Vagina (tissue), 2 donors: ENCODE measurements at regions of chr18 and their contacts with region 1.

Region 1: GRCh38 chr18:45686891-45687611 is 36.9 kb upstream of the SLC14A1 start:
- DNase-seq: peak in 1 of 2 donors; percentile 95
- H3K4me3 ChIP-seq: no peak overlapping the region
- H3K27ac ChIP-seq: no peak overlapping the region
- H3K4me1 ChIP-seq: no peaks in the 10 kb centered on the region
- H3K27me3 ChIP-seq: no peaks in the 10 kb centered on the region
- CTCF ChIP-seq: no peak
- POLR2A ChIP-seq: no peak

Region 2: GRCh38 chr18:45879681-45880655 is 192.9 kb after region 1 on chr18:
- intact Hi-C with region 1: loop called (anchors 10 kb)
- DNase-seq: no peak
- H3K4me3 ChIP-seq: no peak overlapping the region
- H3K27ac ChIP-seq: no peak overlapping the region
- H3K4me1 ChIP-seq: no peaks in the 10 kb centered on the region
- H3K27me3 ChIP-seq: no peaks in the 10 kb centered on the region
- CTCF ChIP-seq: peak; percentile 88 to 93 (median 93)
- POLR2A ChIP-seq: no peak

Region 3: DNA sequence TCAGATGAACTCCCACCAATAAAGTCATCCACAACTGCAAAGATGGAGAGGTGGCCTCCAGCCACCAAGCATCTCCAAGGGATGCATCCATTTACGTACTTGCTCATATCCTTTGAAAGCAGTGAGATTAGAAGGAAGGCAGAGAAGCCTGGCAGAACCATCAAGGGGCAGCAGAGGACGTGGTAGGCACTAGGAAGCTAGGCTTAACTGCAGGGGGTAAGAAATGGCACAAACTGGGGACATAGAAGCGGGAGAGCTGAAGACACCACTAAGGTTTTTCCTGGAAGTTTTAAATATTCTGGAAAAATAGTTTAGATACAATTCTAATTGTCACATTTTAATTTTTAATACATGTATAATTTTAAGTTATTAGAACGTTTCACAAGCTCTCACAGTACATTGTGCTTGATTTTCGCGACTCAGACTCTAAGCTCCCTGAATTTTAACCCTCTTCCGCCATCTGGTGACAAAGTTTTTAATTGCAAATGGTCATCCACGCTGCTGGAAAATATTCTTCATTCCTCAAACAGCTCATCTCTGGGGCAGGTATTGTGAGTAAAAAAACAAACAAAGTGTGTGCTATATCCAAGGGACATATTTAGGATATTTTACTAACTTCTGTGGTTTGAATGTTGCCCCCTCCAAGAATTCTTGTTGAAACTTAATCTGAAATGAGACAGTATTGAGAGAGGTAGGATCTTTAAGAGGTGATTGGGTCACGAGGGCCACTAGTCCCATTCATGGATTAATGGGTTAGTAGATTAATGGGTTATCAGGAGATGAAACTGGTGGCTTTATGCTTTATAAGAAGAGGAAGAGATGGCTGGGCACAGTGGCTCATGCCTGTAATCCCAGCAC is 386.7 kb after region 1 on chr18:
- intact Hi-C with region 1: loop called (anchors 10 kb)
- DNase-seq: no peak
- H3K4me3 ChIP-seq: no peak overlapping the region
- H3K27ac ChIP-seq: no peak overlapping the region
- H3K4me1 ChIP-seq: peaks cover 23% of the 10 kb centered on the region
- H3K27me3 ChIP-seq: no peaks in the 10 kb centered on the region
- CTCF ChIP-seq: peak; percentile 46 to 56 (median 54)
- POLR2A ChIP-seq: no peak